ENCODE measurements at regions of chr17 and their contacts with region 1.

Region 1: GRCh38 chr17:75393523-75394331 is 11.8 kb downstream of the GRB2 start:
- DNase-seq: peak; percentile 91
- CTCF ChIP-seq: no peak

Region 2: DNA sequence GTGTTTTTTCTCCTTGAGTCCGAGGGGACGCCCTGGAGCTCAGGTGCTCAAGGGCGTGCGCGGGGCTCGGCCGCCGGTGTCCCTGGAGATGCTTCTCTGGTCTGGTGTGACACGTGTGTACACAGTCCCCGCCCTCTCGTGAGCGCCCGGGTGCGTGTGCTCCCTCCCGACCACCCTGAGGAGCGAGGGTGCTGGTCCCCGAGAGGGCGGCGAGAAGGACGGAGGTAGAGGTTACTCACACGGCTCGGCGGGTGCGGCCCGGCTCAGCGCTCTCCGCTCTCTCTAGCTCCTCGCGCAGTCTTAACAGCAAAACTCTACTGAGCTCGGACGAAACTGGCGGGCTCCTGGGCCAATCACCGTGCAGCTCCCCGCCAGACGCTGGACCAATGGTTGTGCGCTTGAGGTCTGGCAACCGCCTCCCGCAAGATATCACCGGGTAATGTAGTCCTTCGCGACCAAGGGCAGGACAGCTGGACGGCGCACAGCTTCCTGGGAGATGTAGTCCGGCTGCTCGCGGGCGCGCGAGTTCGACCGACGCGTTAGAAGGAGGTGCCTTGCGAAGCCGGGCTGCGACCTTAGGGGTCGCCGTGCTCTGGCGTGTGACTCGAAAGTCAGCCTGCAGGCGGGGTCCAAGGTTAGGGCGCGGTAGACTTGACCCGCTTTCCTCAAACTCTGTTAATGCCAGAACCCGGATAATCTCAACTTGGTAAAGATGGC is 104.5 kb before region 1 on chr17 and contains the start of gene SLC25A19:
- CTCF ChIA-PET with region 1: interaction called, 10 read pairs
- POLR2A ChIA-PET with region 1: interaction called, 4 read pairs
- DNase-seq: peak; percentile 97
- CTCF ChIP-seq: peak; percentile 49

Region 3: GRCh38 chr17:75371339-75371738 is 22.4 kb before region 1 on chr17:
- CTCF ChIA-PET with region 1: interaction called, 13 read pairs
- POLR2A ChIA-PET with region 1: interaction called, 7 read pairs
- DNase-seq: no peak
- CTCF ChIP-seq: no peak

Region 4: GRCh38 chr17:75380315-75380714 is 13.4 kb before region 1 on chr17:
- CTCF ChIA-PET with region 1: interaction called, 12 read pairs
- POLR2A ChIA-PET with region 1: interaction called, 7 read pairs
- DNase-seq: no peak
- CTCF ChIP-seq: no peak

Region 5: GRCh38 chr17:75405365-75406221 is 11.9 kb after region 1 on chr17 and contains the start of gene GRB2:
- CTCF ChIA-PET with region 1: interaction called, 3 read pairs
- POLR2A ChIA-PET with region 1: interaction called, 10 read pairs
- DNase-seq: peak; percentile 99
- CTCF ChIP-seq: no peak

Region 6: DNA sequence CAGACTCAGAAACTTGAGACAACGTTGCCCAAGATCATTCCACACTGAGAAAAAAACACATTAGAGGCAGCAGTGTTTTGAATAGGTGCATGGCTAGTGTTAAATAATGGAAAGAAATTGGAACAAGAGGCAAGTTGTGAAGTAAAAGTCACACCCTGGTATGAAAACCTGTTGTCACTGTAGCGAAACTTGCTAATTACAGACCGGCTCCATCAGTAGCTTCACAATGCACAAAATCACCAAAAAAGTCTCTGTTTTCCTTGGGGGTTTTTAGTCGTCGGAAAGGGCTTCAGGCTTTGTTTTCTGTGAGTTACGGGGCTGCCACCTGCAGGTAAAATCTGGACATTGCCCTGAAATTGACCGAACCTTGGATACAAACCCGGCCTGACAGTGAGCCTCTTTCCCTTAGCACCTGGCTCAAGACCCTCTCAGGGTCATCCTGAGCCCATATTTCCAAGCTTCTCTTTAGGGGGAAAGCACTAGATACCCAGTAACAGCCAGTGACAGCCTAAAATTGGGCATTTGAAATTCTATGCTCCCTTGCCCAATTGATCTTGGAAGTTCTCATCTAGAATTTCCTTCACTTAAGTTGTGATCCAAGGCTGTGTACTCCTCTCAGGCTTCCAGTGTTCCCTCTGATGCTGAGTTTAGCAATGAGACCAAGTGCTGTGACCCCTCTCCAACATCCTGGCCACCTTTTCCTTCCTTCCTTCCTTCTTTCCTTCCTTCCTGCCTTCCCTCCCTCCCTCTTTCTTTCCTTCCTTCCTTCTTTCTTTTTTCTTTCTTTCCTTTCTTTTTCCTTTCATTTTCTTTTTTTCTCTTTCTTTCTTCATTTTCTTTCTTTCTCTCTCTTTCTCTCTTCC is 19.0 kb after region 1 on chr17:
- CTCF ChIA-PET with region 1: interaction called, 10 read pairs
- POLR2A ChIA-PET with region 1: interaction called, 3 read pairs
- DNase-seq: peak; percentile 77
- CTCF ChIP-seq: peak; percentile 65

Measured in GM10248 (cell line).